IMR-90 (cell line): ENCODE measurements at regions of chr1 and their contacts with region 1.

Region 1: GRCh38 chr1:206892351-206892984 is 4.8 kb upstream of the IL24 start:
- DNase-seq: peak; percentile 84
- ATAC-seq: peak; percentile 50
- H3K4me3 ChIP-seq: no peak overlapping the region
- H3K27ac ChIP-seq: peak overlapping the region; percentile 22; the same call in 1 of the 2 replicates
- H3K4me1 ChIP-seq: peaks cover 36% of the 10 kb centered on the region
- H3K27me3 ChIP-seq: no peaks in the 10 kb centered on the region
- CTCF ChIP-seq: no peak
- POLR2A ChIP-seq: no peak
- RAD21 ChIP-seq: no peak

Region 2: GRCh38 chr1:206797534-206798383 is 94.7 kb before region 1 on chr1:
- CTCF ChIA-PET with region 1: no interaction called
- POLR2A ChIA-PET with region 1: no interaction called
- dilution Hi-C with region 1: no loop called
- in situ Hi-C with region 1: no loop called
- intact Hi-C with region 1: no loop called
- DNase-seq: no peak
- ATAC-seq: no peak
- H3K4me3 ChIP-seq: no peak overlapping the region
- H3K27ac ChIP-seq: no peak overlapping the region
- H3K4me1 ChIP-seq: no peaks in the 10 kb centered on the region
- H3K27me3 ChIP-seq: no peaks in the 10 kb centered on the region
- CTCF ChIP-seq: peak; percentile 25; the same call in 1 of the 2 replicates
- POLR2A ChIP-seq: no peak
- RAD21 ChIP-seq: peak; percentile 11; the same call in 1 of the 2 replicates

Region 3: GRCh38 chr1:206851341-206852010 is 41.0 kb before region 1 on chr1:
- CTCF ChIA-PET with region 1: no interaction called
- POLR2A ChIA-PET with region 1: no interaction called
- dilution Hi-C with region 1: no loop called
- in situ Hi-C with region 1: no loop called
- intact Hi-C with region 1: no loop called
- DNase-seq: peak; percentile 44
- ATAC-seq: no peak
- H3K4me3 ChIP-seq: no peak overlapping the region
- H3K27ac ChIP-seq: no peak overlapping the region
- H3K4me1 ChIP-seq: peaks cover 2% of the 10 kb centered on the region; the same call in 1 of the 2 replicates
- H3K27me3 ChIP-seq: no peaks in the 10 kb centered on the region; the same call in 1 of the 2 replicates
- CTCF ChIP-seq: no peak
- POLR2A ChIP-seq: no peak
- RAD21 ChIP-seq: no peak

Region 4: DNA sequence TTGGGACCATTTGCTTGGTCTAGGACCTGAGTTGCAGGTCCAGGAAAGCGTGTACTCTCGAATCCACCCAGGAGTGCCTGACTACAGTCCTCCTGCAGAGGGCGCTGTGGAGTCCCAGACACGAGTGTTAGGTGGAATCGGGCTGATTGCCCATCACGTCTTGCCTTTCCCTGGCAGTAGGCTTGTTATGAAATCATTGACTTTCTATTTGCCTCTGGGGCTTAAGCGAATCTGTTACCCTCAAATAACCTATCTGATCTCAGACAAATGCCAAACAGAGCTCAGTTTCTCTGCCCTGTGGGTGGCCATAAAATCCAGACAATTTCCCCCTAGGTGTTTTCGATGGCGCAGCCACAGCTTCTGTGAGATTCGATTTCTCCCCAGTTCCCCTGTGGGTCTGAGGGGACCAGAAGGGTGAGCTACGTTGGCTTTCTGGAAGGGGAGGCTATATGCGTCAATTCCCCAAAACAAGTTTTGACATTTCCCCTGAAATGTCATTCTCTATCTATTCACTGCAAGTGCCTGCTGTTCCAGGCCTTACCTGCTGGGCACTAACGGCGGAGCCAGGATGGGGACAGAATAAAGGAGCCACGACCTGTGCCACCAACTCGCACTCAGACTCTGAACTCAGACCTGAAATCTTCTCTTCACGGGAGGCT is 27.3 kb before region 1 on chr1 and contains the start of gene IL20:
- CTCF ChIA-PET with region 1: interaction called, 4 read pairs
- POLR2A ChIA-PET with region 1: interaction called, 14 read pairs
- dilution Hi-C with region 1: no loop called
- in situ Hi-C with region 1: no loop called
- intact Hi-C with region 1: no loop called
- DNase-seq: peak; percentile 80
- ATAC-seq: peak; percentile 64
- H3K4me3 ChIP-seq: no peak within 1 kb of the TSS
- H3K27ac ChIP-seq: peak within 1 kb of the TSS; percentile 18; the same call in 1 of the 2 replicates
- H3K4me1 ChIP-seq: peaks cover 6% of the 10 kb centered on the region
- H3K27me3 ChIP-seq: peaks cover 5% of the 10 kb centered on the region; the same call in 1 of the 2 replicates
- CTCF ChIP-seq: peak; percentile 87
- POLR2A ChIP-seq: no peak
- RAD21 ChIP-seq: peak; percentile 74
- total RNA-seq, gene IL20: not detected in 2 replicates